Heart left ventricle (tissue), 16 donors: ENCODE measurements at regions of chr14 and their contacts with region 1.

Region 1: GRCh38 chr14:23174276-23175184 is 8.9 kb downstream of the SLC7A8 start:
- DNase-seq: no peak
- ATAC-seq: peak in 2 of 4 donors; percentile 41 to 54
- H3K4me3 ChIP-seq: no peak overlapping the region
- H3K27ac ChIP-seq: peak overlapping the region in 1 of 12 donors; percentile 4
- H3K4me1 ChIP-seq: peaks cover 0 to 28% (median 0%) of the 10 kb centered on the region in 12 donors
- H3K27me3 ChIP-seq: no peaks in the 10 kb centered on the region
- CTCF ChIP-seq: no peak
- POLR2A ChIP-seq: no peak

Region 2: GRCh38 chr14:23095196-23096108 is 79.1 kb before region 1 on chr14 and contains the start of gene C14orf119:
- intact Hi-C with region 1: no loop called
- DNase-seq: peak; percentile 94 to 100 (median 100)
- ATAC-seq: peak; percentile 92 to 96 (median 96)
- H3K4me3 ChIP-seq: peak within 1 kb of the TSS; percentile 57 to 96 (median 81)
- H3K27ac ChIP-seq: peak within 1 kb of the TSS; percentile 92 to 99 (median 97)
- H3K4me1 ChIP-seq: peaks cover 5 to 69% (median 42%) of the 10 kb centered on the region in 12 donors
- H3K27me3 ChIP-seq: no peaks in the 10 kb centered on the region
- CTCF ChIP-seq: no peak
- POLR2A ChIP-seq: peak; percentile 12 to 69
- total RNA-seq, gene C14orf119: 15.3 to 35.9 (median 29.6) TPM

Region 3: GRCh38 chr14:23130871-23131270 is 43.7 kb before region 1 on chr14:
- intact Hi-C with region 1: loop called in 1 of 10 experiments (anchors 5 kb)
- DNase-seq: peak in 1 of 5 donors; percentile 54
- ATAC-seq: peak in 1 of 4 donors; percentile 25
- H3K4me3 ChIP-seq: no peak overlapping the region
- H3K27ac ChIP-seq: no peak overlapping the region
- H3K4me1 ChIP-seq: peaks cover 0 to 10% (median 0%) of the 10 kb centered on the region in 12 donors
- H3K27me3 ChIP-seq: no peaks in the 10 kb centered on the region
- CTCF ChIP-seq: no peak
- POLR2A ChIP-seq: no peak